H1 (cell line): ENCODE measurements at regions of chr2 and their contacts with region 1.

Region 1: GRCh38 chr2:15684161-15685039 is 92.7 kb downstream of the DDX1 start:
- DNase-seq: no peak
- H3K4me3 ChIP-seq: no peak overlapping the region
- H3K27ac ChIP-seq: no peak overlapping the region
- H3K4me1 ChIP-seq: peaks cover 0 to 2% (median 0%) of the 10 kb centered on the region in 4 experiments; a peak in 2 of 7 replicates
- H3K27me3 ChIP-seq: no peaks in the 10 kb centered on the region
- CTCF ChIP-seq: no peak
- EP300 ChIP-seq: no peak
- POLR2A ChIP-seq: no peak
- RAD21 ChIP-seq: no peak

Region 2: DNA sequence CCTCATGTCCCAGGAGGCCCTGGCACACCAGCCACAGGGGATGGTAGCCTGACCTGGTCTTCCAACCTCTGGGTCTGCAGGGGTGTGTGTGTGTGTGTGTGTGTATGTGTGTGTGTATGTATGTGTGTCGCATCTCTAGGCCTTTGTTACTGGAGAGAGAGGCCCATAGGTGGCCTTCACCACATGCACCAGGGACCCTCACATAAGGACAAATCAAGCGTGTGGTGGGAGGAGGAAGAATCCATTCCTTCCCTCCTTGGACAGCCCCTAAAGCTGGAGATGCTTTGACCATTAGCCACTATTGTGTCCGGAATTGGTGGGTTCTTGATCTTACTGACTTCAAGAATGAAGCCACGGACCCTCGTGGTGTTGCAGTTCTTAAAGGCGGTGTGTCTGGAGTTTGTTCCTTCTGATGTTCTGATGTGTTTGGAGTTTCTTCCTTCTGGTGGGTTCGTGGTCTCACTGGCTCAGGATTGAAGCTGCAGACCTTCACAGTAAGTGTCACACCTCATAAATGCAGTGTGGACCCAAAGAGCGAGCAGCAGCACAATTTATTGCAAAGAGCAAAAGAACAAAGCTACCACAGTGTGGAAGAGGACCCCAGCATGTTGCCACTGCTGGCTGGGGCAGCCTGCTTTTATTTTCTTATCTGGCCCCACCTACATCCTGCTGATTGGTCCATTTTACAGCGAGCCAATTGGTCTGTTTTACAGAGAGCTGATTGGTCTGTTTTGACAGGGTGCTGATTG is 11.4 kb after region 1 on chr2:
- CTCF ChIA-PET with region 1: interaction called, 17 read pairs
- POLR2A ChIA-PET with region 1: no interaction called
- DNase-seq: no peak
- H3K4me3 ChIP-seq: no peak overlapping the region
- H3K27ac ChIP-seq: no peak overlapping the region
- H3K4me1 ChIP-seq: no peaks in the 10 kb centered on the region; a peak in 1 of 7 replicates
- H3K27me3 ChIP-seq: no peaks in the 10 kb centered on the region
- CTCF ChIP-seq: no peak
- EP300 ChIP-seq: no peak
- POLR2A ChIP-seq: no peak
- RAD21 ChIP-seq: no peak

Region 3: GRCh38 chr2:15737314-15738224 is 53.2 kb after region 1 on chr2:
- CTCF ChIA-PET with region 1: no interaction called
- POLR2A ChIA-PET with region 1: no interaction called
- DNase-seq: no peak
- H3K4me3 ChIP-seq: no peak overlapping the region
- H3K27ac ChIP-seq: no peak overlapping the region
- H3K4me1 ChIP-seq: peaks cover 0 to 4% (median 0%) of the 10 kb centered on the region in 4 experiments; a peak in 1 of 7 replicates
- H3K27me3 ChIP-seq: no peaks in the 10 kb centered on the region
- CTCF ChIP-seq: no peak
- EP300 ChIP-seq: no peak
- POLR2A ChIP-seq: no peak
- RAD21 ChIP-seq: no peak